Prostate gland (tissue), 2 donors: ENCODE measurements at regions of chr3 and their contacts with region 1.

Region 1: GRCh38 chr3:192433704-192434103 is 293.6 kb downstream of the FGF12 start:
- DNase-seq: no peak
- H3K4me3 ChIP-seq: no peak overlapping the region
- H3K27ac ChIP-seq: no peak overlapping the region
- H3K4me1 ChIP-seq: no peaks in the 10 kb centered on the region
- H3K27me3 ChIP-seq: peaks cover 3% of the 10 kb centered on the region
- CTCF ChIP-seq: no peak
- POLR2A ChIP-seq: no peak

Region 2: GRCh38 chr3:192122832-192123594 is 310.7 kb before region 1 on chr3:
- intact Hi-C with region 1: loop called (anchors 10 kb)
- DNase-seq: no peak
- H3K4me3 ChIP-seq: no peak overlapping the region
- H3K27ac ChIP-seq: no peak overlapping the region
- H3K4me1 ChIP-seq: no peaks in the 10 kb centered on the region
- H3K27me3 ChIP-seq: no peaks in the 10 kb centered on the region
- CTCF ChIP-seq: no peak
- POLR2A ChIP-seq: no peak

Region 3: GRCh38 chr3:192316548-192316947 is 117.2 kb before region 1 on chr3:
- intact Hi-C with region 1: no loop called
- DNase-seq: no peak
- H3K4me3 ChIP-seq: no peak overlapping the region
- H3K27ac ChIP-seq: no peak overlapping the region
- H3K4me1 ChIP-seq: no peaks in the 10 kb centered on the region
- H3K27me3 ChIP-seq: no peaks in the 10 kb centered on the region
- CTCF ChIP-seq: no peak
- POLR2A ChIP-seq: no peak